ENCODE measurements at regions of chr9 and their contacts with region 1.

Region 1: DNA sequence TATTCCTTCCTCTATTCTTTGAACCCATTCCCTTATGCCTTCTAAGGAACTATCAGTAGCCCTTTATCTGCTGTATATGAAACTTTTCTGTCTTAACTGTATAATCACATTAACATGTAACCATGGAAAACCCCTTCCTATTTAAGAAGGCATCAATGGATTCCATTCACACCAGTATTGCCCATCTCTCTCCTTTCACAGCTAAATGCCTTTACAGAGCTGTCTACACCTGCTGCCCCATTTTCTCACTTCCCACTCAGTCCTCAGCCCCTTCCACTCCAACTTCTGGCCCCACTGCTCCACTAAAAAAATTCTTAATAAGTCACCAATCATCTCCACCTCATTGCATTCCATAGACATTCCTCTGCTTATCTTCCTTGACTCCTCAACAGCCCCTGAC is 50.8 kb downstream of the SEC61B start:
- DNase-seq: no peak
- H3K4me3 ChIP-seq: no peak overlapping the region
- H3K27ac ChIP-seq: no peak overlapping the region
- H3K27me3 ChIP-seq: no peaks in the 10 kb centered on the region
- CTCF ChIP-seq: no peak

Region 2: DNA sequence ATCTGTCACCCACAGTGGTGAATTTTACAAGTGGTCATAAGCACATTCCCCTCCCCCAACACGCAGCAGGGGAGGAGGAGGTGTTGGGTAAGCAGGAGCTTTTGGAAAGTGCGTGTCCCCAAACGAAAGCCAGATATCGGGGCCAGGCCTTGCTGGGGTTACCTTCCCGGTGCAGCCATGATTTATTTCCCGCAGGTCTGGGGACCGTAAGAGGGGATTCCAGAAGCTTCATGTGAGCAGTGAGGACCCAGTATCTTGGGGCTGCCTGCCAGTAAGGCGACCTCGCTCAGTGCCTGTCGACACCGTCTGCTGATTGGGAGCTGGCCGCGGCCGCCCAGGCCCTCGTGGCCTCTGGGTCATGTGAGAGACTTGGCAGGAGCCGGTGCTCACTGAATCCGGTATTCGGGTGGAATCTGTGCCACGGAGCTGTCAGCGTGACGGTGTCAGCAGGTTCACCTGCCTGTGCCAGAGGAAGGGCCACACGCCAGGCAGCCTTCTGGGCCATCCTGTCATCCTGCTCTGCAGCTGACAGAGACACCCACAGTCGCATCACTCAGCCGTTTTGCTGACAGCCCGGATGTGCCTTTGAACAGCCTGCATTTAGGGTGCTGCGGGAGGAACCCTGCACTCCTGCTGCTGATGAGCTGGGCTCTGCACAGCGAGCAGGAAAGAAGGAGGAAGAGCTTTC is 13.5 kb before region 1 on chr9:
- intact Hi-C with region 1: no loop called
- DNase-seq: peak; percentile 70 to 96 (median 84)
- H3K4me3 ChIP-seq: peak overlapping the region; percentile 13 to 72 (median 53)
- H3K27ac ChIP-seq: peak overlapping the region; percentile 38 to 94 (median 85)
- H3K27me3 ChIP-seq: no peaks in the 10 kb centered on the region
- CTCF ChIP-seq: peak in 7 of 56 donors; percentile 7 to 43 (median 10)

Region 3: DNA sequence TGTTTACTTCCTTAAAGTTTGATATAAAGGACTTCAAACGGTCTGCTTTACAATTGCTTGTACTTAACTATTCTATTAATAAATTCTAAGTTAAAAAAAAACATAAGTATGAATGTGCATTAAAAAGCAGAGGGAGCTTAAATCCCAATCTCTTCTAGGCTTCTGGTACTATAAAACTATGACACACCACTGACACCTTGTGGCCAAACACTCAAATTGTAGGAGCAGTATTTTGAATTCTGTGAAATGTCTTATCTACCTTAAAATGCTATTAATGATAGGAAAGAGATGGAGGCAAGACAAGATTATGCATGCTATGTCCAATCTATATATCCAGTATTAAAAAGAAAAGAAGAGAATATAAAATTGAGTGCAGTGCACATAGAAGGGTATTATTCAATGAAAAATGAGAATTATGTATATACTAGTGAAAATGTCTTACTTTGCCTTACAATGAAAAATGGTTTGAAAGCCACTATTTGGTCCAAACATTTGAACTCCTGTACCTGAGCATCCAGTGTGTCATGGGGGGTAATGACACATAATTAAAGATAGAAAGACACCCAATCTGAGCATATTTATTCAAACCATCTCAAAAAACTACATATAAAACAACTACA is 738.3 kb after region 1 on chr9:
- intact Hi-C with region 1: loop called (anchors 10 kb)
- DNase-seq: no peak
- H3K4me3 ChIP-seq: no peak overlapping the region
- H3K27ac ChIP-seq: no peak overlapping the region
- H3K27me3 ChIP-seq: no peaks in the 10 kb centered on the region
- CTCF ChIP-seq: peak in 54 of 56 donors; percentile 21 to 62 (median 40)